Endothelial cell of umbilical vein (primary cell): ENCODE measurements at regions of chr9 and their contacts with region 1.

Region 1: DNA sequence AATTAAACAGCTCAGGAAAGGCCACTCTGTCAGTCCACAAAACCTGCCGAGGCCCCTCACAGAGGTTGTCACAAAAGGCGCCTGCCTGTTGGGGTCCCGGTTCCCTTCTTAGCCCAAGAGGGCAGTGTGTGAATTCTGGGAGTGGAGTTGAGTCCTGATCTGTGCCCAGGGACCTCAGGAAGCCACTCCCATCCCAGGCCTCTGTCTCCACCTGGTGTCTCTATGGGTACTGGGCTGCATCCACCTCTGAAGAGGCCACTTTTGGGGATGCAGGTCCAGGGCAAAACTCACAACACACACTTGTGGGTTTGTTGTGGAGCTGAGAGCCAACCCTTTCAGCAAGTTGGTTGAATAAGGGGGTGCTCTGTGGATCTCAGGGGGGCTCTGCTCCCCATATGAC is 74.3 kb upstream of the STXBP1 start:
- DNase-seq: no peak
- H3K4me3 ChIP-seq: no peak overlapping the region
- H3K27ac ChIP-seq: no peak overlapping the region
- H3K4me1 ChIP-seq: peaks cover 31% of the 10 kb centered on the region
- H3K27me3 ChIP-seq: no peaks in the 10 kb centered on the region
- CTCF ChIP-seq: peak in 1 of 2 donors; percentile 24
- POLR2A ChIP-seq: no peak

Region 2: DNA sequence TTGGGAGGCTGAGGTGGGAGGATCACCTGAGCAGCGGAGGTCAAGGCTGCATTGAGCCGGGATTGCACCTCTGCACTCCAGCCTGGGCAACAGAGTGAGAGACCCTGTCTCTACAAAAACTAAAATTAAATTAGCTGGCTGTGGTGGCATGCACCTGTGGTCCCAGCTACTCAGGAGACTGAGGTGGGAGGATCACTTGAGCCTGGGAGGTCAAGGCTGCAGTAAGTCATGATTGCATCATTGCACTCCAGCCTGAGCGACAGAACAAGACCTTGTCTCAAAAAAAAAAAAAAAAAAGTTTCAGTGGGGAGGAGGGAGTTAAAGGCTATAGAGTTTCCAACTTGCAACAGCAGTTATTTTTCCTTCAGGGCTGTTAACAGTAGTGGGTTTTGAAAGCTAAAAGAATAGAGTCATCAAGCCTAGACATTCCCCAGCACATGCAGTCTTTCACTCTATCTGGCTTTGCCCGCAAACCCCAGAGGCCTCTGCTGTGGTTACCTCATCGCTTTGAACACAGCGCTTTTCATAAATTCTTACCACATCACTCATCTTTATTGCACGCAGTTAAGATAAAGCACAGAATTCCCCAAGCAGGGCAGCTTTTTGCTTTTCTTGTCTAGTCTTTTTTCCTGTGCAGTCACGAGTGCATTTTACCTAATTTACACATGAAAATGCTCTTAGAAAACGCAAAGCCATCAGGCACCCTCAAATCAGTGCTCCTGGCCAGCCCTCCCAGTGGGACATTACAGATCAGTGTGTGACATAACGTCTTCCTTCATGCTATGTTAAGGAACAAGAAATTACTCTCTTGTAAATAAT is 149.5 kb before region 1 on chr9:
- CTCF ChIA-PET with region 1: no interaction called
- POLR2A ChIA-PET with region 1: no interaction called
- dilution Hi-C with region 1: no loop called
- intact Hi-C with region 1: no loop called
- DNase-seq: no peak
- H3K4me3 ChIP-seq: no peak overlapping the region
- H3K27ac ChIP-seq: no peak overlapping the region
- H3K4me1 ChIP-seq: no peaks in the 10 kb centered on the region
- H3K27me3 ChIP-seq: peaks cover 0 to 2% of the 10 kb centered on the region in 2 experiments
- CTCF ChIP-seq: no peak
- POLR2A ChIP-seq: no peak

Region 3: DNA sequence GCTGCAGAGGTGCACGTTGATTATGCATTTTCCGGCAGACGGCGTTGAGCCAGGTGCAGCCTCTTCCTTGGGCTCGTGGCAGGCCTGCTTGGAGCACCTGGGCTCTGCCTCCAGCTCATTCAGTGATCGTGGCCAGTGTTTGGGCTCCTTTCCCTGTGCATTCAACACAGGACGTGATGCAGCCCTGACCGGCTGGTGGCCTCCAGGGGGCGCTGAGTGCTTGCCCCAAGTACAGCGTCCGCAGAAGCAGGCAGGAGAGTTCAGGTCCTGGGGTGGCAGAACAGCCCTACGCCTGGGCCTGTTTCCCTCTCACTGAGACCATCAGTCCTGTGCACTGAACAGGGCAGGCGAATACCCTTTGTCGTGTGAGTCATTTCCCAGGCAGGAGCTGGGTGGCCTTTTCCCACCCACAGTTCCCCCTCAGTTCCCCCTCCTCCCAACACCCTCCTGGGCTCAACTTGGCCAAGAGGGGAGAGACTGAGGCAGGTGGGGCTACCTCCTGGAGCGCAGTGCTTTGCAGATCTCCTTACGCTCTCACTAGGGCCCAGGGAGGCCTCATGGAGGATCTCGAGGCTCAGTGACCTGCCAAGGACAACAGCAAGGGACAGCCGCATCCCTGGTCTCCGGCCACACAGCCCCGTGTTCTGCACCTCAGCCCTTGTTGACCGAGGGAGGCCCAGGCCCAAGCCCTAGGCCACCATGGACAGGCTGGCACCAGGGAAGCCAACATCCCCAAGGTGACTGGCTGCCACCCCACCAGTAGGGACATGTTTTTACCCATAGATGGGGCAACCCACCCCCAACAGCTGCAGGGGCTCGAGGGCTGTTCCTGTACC is 33.6 kb before region 1 on chr9:
- CTCF ChIA-PET with region 1: interaction called, 7 read pairs
- POLR2A ChIA-PET with region 1: no interaction called
- dilution Hi-C with region 1: no loop called
- intact Hi-C with region 1: loop called (anchors 2 kb)
- DNase-seq: peak; percentile 75
- H3K4me3 ChIP-seq: no peak overlapping the region
- H3K27ac ChIP-seq: no peak overlapping the region
- H3K4me1 ChIP-seq: no peaks in the 10 kb centered on the region
- H3K27me3 ChIP-seq: no peaks in the 10 kb centered on the region
- CTCF ChIP-seq: peak; percentile 86 to 98
- POLR2A ChIP-seq: no peak

Region 4: GRCh38 chr9:127519301-127520166 is 18.3 kb before region 1 on chr9:
- CTCF ChIA-PET with region 1: interaction called, 24 read pairs
- POLR2A ChIA-PET with region 1: no interaction called
- dilution Hi-C with region 1: no loop called
- intact Hi-C with region 1: no loop called
- DNase-seq: peak; percentile 95
- H3K4me3 ChIP-seq: no peak overlapping the region
- H3K27ac ChIP-seq: peak overlapping the region; percentile 99
- H3K4me1 ChIP-seq: peaks cover 46% of the 10 kb centered on the region
- H3K27me3 ChIP-seq: no peaks in the 10 kb centered on the region
- CTCF ChIP-seq: no peak
- POLR2A ChIP-seq: no peak

Region 5: GRCh38 chr9:127525401-127526187 is 12.2 kb before region 1 on chr9:
- CTCF ChIA-PET with region 1: interaction called, 25 read pairs
- POLR2A ChIA-PET with region 1: no interaction called
- dilution Hi-C with region 1: no loop called
- intact Hi-C with region 1: no loop called
- DNase-seq: no peak
- H3K4me3 ChIP-seq: no peak overlapping the region
- H3K27ac ChIP-seq: no peak overlapping the region
- H3K4me1 ChIP-seq: peaks cover 51% of the 10 kb centered on the region
- H3K27me3 ChIP-seq: no peaks in the 10 kb centered on the region
- CTCF ChIP-seq: peak; percentile 53 to 55
- POLR2A ChIP-seq: no peak

Region 6: GRCh38 chr9:127555768-127556397 is 18.1 kb after region 1 on chr9:
- CTCF ChIA-PET with region 1: interaction called, 21 read pairs
- POLR2A ChIA-PET with region 1: no interaction called
- dilution Hi-C with region 1: no loop called
- intact Hi-C with region 1: no loop called
- DNase-seq: peak; percentile 93
- H3K4me3 ChIP-seq: no peak overlapping the region
- H3K27ac ChIP-seq: peak overlapping the region; percentile 95
- H3K4me1 ChIP-seq: peaks cover 56% of the 10 kb centered on the region
- H3K27me3 ChIP-seq: no peaks in the 10 kb centered on the region
- CTCF ChIP-seq: no peak
- POLR2A ChIP-seq: peak; percentile 51

Region 7: GRCh38 chr9:127561619-127562500 is 24.1 kb after region 1 on chr9:
- CTCF ChIA-PET with region 1: interaction called, 21 read pairs
- POLR2A ChIA-PET with region 1: no interaction called
- dilution Hi-C with region 1: no loop called
- intact Hi-C with region 1: no loop called
- DNase-seq: peak; percentile 91
- H3K4me3 ChIP-seq: no peak overlapping the region
- H3K27ac ChIP-seq: peak overlapping the region; percentile 85
- H3K4me1 ChIP-seq: peaks cover 71% of the 10 kb centered on the region
- H3K27me3 ChIP-seq: no peaks in the 10 kb centered on the region
- CTCF ChIP-seq: no peak
- POLR2A ChIP-seq: no peak